ENCODE measurements at regions of chr21 and their contacts with region 1.

Region 1: DNA sequence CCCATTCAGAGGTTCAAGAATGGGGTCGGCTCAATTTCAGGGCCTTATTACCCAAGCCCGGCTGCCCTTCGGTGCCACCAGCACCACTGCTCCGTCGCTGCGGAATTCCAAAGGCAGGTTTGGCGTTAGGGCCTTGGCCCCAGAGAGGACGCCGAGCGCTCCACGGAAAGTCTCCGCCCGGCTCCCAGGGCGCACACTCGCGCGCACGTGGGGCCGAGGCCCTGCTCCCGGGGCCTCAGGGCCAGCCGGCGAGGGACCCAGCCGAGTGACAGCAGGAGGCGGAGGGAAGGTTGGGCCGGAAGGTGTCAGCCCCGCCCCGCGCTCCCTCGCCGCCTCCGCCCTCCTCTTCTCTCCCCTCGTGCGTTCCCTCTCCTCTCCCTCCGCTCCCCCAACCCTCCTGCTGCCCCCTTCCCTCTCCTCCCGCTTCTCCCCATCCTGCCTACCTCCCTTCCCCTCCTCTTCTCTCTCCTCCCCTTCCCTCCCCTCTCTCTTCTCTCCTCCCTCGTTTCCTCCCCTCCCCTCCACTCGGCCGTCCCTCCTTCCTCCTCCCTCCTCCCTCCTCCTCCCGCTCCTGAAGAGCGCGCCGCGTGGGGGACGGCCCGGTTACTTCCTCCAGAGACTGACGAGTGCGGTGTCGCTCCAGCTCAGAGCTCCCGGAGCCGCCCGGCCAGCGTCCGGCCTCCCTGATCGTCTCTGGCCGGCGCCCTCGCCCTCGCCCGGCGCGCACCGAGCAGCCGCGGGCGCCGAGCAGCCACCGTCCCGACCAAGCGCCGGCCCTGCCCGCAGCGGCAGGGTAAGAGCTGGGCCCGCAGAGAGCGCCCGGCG is at the start of gene ETS2:
- DNase-seq: peak; percentile 97
- H3K4me3 Mint-ChIP-seq: peak within 1 kb of the TSS; percentile 97
- H3K27ac Mint-ChIP-seq: peak within 1 kb of the TSS; percentile 98
- H3K4me1 Mint-ChIP-seq: peaks cover 30% of the 10 kb centered on the region
- H3K27me3 Mint-ChIP-seq: no peaks in the 10 kb centered on the region
- CTCF ChIP-seq: no peak
- total RNA-seq, gene ETS2: 109 and 126 TPM in 2 replicates

Region 2: DNA sequence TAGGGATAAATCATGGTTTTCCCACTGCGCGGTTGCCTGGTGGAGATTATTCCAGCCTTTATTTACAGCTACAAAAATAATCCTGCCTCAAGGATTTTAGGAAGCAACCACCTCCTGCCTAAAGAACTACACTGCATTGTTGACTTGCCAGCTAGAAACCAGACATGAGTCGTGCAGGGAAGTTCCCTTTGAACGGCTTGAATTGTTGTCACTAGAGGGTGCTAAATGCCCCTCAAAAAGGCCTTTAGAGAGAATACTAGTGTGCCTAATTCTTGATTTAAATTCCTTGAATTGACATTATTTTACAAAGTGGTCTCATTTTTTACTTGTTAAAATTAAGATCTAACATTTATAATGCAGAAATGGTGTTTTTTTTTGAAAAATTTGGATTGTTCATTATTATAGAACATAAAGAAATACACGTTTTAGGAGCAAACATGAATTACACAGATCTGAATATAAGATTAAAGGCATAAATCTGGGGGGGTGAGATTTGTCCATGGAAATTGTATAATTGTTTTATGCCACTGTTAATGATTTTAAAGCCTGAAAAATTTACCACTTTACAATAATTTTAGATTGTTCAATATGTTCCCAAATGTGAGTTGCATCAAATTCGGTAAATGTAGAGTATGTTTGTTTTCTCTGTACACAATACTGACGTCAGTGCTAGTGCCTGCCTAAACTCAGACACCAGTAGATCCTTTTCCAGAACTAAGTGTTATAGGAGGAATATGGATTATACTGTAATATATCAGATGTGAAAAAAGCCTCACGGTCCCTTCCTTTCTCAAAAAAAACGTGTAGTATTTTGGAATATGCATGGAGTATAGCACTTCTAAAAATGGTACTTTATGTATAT is 299.7 kb before region 1 on chr21:
- CTCF ChIA-PET with region 1: no interaction called
- POLR2A ChIA-PET with region 1: no interaction called
- intact Hi-C with region 1: loop called (anchors 2 kb)
- DNase-seq: peak; percentile 81
- H3K4me3 Mint-ChIP-seq: no peak overlapping the region
- H3K27ac Mint-ChIP-seq: no peak overlapping the region
- H3K4me1 Mint-ChIP-seq: peaks cover 5% of the 10 kb centered on the region
- H3K27me3 Mint-ChIP-seq: no peaks in the 10 kb centered on the region
- CTCF ChIP-seq: peak; percentile 54

Region 3: DNA sequence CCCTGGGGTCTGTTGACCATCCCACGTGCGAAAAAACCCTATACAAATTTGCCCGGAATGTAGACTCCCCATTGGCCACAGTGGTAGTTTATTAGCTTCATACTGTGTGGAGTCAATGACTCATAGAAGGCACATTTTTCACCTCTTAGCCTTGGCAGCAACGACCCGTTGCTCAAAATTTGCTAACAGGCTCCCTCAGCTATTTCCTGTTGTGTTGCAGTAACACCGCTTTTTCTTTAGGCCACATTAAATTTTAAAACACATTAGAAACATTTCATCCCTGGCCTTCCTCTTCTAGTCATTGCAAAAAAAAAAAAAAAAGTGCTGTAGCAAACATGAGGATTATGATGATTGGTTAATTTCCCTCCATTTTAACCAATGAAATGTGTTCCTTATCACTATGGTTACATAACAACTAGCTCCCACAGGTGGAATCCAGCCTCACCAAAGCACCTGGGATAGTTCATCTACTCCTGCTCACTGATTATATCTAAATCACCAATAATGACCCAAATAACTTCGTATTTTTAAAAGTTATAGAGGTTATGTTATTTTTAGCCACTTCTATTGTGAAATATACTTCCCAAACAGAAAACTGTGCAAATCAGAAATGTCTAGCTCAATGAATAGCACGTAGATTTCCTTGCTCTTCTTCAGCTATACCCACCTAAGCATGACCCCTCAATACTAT is 49.7 kb before region 1 on chr21:
- CTCF ChIA-PET with region 1: interaction called, 4 read pairs
- POLR2A ChIA-PET with region 1: interaction called, 132 read pairs
- intact Hi-C with region 1: no loop called
- DNase-seq: peak; percentile 90
- H3K4me3 Mint-ChIP-seq: peak overlapping the region; percentile 26
- H3K27ac Mint-ChIP-seq: peak overlapping the region; percentile 96
- H3K4me1 Mint-ChIP-seq: peaks cover 31% of the 10 kb centered on the region
- H3K27me3 Mint-ChIP-seq: no peaks in the 10 kb centered on the region
- CTCF ChIP-seq: no peak

Region 4: GRCh38 chr21:38787461-38788274 is 17.9 kb before region 1 on chr21:
- CTCF ChIA-PET with region 1: interaction called, 6 read pairs
- POLR2A ChIA-PET with region 1: interaction called, 107 read pairs
- intact Hi-C with region 1: no loop called
- DNase-seq: peak; percentile 97
- H3K4me3 Mint-ChIP-seq: peak overlapping the region; percentile 68
- H3K27ac Mint-ChIP-seq: peak overlapping the region; percentile 86
- H3K4me1 Mint-ChIP-seq: peaks cover 11% of the 10 kb centered on the region
- H3K27me3 Mint-ChIP-seq: no peaks in the 10 kb centered on the region
- CTCF ChIP-seq: no peak

Region 5: DNA sequence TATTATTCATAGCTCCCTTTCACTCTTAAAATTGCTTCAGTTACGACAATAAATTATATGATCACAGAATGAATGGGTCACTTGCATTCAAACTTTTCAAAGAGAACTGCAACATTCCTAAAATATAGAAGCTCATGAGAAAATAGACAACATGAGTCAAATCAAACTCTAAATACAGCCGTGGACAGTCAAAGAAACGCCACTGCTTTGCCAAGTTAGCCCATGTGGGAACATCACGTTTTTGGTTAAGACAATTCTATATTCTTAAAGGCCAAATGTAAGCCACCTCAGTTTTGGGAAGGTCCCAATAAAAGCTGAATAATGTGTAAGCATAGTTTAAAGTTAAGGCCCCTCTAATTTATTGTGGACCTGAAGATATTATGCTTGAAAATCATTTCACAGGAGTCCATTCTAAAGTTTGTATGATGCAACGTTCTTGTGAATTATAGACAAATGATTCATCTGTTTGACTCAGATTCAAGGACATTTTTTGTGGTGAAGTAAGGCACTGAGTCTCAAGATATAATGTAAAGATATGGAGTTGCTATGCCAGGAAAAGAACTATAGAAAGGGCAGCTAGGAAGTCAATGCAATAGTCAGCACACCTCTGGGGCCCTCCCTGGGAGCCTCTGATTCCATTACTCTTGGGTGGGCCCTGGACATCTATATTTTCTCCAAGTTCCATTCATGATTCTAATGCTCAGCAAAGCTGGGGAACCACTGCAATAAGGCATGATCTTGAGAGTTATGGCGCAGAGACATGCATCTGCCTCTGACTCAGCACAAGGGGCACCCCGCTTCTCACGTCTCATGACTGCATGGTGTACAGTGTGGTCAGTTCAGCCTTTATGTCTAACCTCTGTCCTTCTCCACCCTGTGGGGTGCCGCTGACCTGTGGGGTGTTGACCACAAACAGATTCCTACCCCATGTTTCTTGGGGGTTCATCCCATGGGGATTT is 34.1 kb after region 1 on chr21:
- CTCF ChIA-PET with region 1: no interaction called
- POLR2A ChIA-PET with region 1: interaction called, 28 read pairs
- intact Hi-C with region 1: loop called (anchors 2 kb)
- DNase-seq: peak; percentile 89
- H3K4me3 Mint-ChIP-seq: peak overlapping the region; percentile 15
- H3K27ac Mint-ChIP-seq: peak overlapping the region; percentile 88
- H3K4me1 Mint-ChIP-seq: peaks cover 46% of the 10 kb centered on the region
- H3K27me3 Mint-ChIP-seq: no peaks in the 10 kb centered on the region
- CTCF ChIP-seq: no peak

Region 6: GRCh38 chr21:39125752-39126485 is 320.4 kb after region 1 on chr21:
- CTCF ChIA-PET with region 1: interaction called, 4 read pairs
- POLR2A ChIA-PET with region 1: interaction called, 12 read pairs
- intact Hi-C with region 1: loop called (anchors 1 kb)
- DNase-seq: peak; percentile 78
- H3K4me3 Mint-ChIP-seq: no peak overlapping the region
- H3K27ac Mint-ChIP-seq: peak overlapping the region; percentile 59
- H3K4me1 Mint-ChIP-seq: peaks cover 6% of the 10 kb centered on the region
- H3K27me3 Mint-ChIP-seq: no peaks in the 10 kb centered on the region
- CTCF ChIP-seq: peak; percentile 72